Mammary epithelial cell (primary cell): ENCODE measurements at regions of chr14 and their contacts with region 1.

Region 1: GRCh38 chr14:54566410-54567223 is at the start of gene SAMD4A:
- DNase-seq: peak; percentile 83
- H3K4me3 ChIP-seq: peak within 1 kb of the TSS; percentile 82 to 90 (median 85)
- H3K27ac ChIP-seq: peak within 1 kb of the TSS; percentile 84
- H3K4me1 ChIP-seq: peaks cover 40% of the 10 kb centered on the region
- H3K27me3 ChIP-seq: no peaks in the 10 kb centered on the region
- CTCF ChIP-seq: peak; percentile 14 to 46
- total RNA-seq, gene SAMD4A: 42.0 to 48.8 TPM

Region 2: DNA sequence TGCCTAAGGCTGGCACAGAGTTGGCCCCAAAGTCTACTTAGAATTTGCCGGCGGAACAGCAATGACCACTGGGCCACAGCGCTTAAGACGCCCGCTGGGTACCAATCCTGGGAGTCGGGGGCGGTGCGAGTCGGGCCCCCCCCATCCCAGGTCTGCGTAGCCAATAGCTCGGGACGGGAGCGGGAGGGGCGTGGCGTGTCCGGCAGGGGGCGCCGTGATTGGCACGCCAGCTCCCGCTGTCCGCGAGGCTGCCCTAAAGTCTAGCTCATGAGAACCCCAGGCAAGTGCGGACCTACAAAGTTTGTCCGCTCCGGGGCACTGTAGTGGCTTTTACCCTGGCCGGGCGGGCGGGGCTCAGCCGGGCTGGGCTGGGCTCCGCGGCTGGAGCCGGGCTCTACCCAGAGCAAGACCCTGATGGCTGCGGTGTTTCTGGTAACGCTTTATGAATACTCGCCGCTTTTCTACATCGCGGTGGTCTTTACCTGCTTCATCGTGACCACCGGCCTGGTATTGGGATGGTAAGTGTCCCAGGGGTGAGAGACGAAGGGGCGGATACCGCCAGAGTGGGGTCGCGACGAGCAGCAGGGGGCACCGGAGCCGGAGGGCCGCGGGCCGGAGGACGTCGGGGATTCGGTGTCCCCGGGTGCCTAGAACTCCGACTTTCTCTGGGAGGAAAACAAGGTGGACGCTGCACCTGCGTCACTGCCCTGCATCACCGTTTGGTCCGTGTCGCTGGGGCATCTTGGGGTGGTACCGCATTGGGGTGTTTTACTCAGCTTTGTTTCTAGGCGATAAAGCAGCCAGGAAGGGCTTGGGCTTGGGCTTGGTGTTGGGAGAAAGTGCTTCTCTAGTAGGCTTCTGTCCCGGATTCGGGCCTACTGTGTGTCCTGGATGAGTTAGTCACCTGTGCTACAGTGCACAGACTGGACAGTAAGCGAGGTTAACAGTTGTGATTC is 56.8 kb before region 1 on chr14 and contains the start of gene CGRRF1:
- CTCF ChIA-PET with region 1: no interaction called
- dilution Hi-C with region 1: no loop called
- in situ Hi-C with region 1: no loop called
- intact Hi-C with region 1: loop called (anchors 2 kb)
- DNase-seq: peak; percentile 98
- H3K4me3 ChIP-seq: peak within 1 kb of the TSS; percentile 90 to 97 (median 96)
- H3K27ac ChIP-seq: peak within 1 kb of the TSS; percentile 63
- H3K4me1 ChIP-seq: peaks cover 8% of the 10 kb centered on the region
- H3K27me3 ChIP-seq: no peaks in the 10 kb centered on the region
- CTCF ChIP-seq: peak in 1 of 2 donors; percentile 49
- total RNA-seq, gene CGRRF1: 14.3 to 16.4 TPM

Region 3: DNA sequence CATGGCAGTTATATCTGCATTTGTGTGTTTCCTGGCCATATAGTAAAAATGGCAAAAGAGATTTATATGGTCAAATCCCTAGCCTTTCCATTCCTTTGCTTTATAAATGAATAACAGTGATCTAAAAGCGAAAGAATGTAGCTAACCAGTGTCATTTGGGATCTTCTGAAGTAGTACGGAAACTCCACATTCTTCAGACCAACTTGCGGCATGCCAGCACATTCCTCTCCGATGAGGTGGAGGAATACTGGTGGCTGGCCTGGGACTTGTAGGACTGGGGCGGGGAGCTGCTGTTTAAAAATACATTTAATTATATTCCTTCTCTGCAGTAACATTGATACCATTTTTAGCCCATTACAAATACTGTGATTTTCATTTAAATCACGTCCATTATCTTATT is 85.6 kb after region 1 on chr14:
- CTCF ChIA-PET with region 1: interaction called, 9 read pairs
- dilution Hi-C with region 1: no loop called
- in situ Hi-C with region 1: no loop called
- intact Hi-C with region 1: loop called (anchors 2 kb)
- DNase-seq: peak; percentile 98
- H3K4me3 ChIP-seq: peak overlapping the region in 2 of 3 experiments; percentile 37 to 40
- H3K27ac ChIP-seq: peak overlapping the region; percentile 94
- H3K4me1 ChIP-seq: peaks cover 45% of the 10 kb centered on the region
- H3K27me3 ChIP-seq: no peaks in the 10 kb centered on the region
- CTCF ChIP-seq: no peak

Region 4: GRCh38 chr14:54691525-54692283 is 125.1 kb after region 1 on chr14:
- CTCF ChIA-PET with region 1: interaction called, 24 read pairs
- dilution Hi-C with region 1: loop called (anchors 5 kb)
- in situ Hi-C with region 1: loop called (anchors 5 to 10 kb)
- intact Hi-C with region 1: loop called (anchors 1 kb)
- DNase-seq: peak; percentile 64
- H3K4me3 ChIP-seq: no peak overlapping the region
- H3K27ac ChIP-seq: no peak overlapping the region
- H3K4me1 ChIP-seq: peaks cover 8% of the 10 kb centered on the region
- H3K27me3 ChIP-seq: no peaks in the 10 kb centered on the region
- CTCF ChIP-seq: peak; percentile 93 to 97

Region 5: DNA sequence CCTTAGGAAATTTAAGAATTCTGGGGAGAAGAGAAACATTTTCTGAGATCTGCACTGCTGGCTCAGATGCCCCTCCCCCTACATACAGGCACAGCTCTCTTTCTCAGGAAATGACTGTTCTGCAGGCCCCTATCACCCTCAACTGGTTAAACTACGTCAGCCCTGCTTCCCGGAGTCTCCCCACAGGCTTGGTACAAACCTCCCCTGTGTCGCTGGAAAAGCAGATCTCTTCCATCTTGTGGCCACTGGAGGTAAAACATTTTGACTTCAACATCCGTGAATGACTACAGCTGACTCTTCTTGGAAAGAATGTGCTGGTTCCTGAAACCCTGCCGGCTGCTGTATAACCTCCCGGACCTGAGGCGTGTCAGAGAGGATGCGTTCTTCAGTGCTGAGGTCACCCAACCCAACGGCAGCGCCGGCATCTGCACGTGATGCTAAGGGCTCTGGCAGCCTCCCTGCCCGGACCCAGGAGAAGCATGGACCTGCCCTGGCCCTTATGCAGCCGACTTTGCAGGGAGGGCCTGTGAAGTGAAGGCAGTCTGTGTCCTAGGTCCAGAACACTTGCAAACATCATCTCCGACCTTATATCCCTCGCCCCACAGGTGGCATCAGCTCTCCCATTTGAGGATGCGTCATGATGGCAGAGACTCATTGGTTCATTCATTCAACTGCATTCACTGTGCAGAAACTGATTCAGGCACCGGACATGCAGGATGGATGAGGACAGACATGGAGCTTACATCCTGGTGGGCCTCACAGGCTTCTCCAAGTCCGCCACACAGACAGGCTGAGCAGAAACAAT is 206.8 kb after region 1 on chr14:
- CTCF ChIA-PET with region 1: interaction called, 22 read pairs
- dilution Hi-C with region 1: no loop called
- in situ Hi-C with region 1: no loop called
- intact Hi-C with region 1: loop called (anchors 1 kb)
- DNase-seq: peak; percentile 99
- H3K4me3 ChIP-seq: no peak overlapping the region
- H3K27ac ChIP-seq: peak overlapping the region; percentile 93
- H3K4me1 ChIP-seq: peaks cover 43% of the 10 kb centered on the region
- H3K27me3 ChIP-seq: no peaks in the 10 kb centered on the region
- CTCF ChIP-seq: peak; percentile 66 to 75

Region 6: GRCh38 chr14:54893151-54893760 is 326.6 kb after region 1 on chr14:
- CTCF ChIA-PET with region 1: no interaction called
- dilution Hi-C with region 1: no loop called
- in situ Hi-C with region 1: no loop called
- intact Hi-C with region 1: loop called (anchors 1 kb)
- DNase-seq: peak; percentile 86
- H3K4me3 ChIP-seq: no peak overlapping the region
- H3K27ac ChIP-seq: peak overlapping the region; percentile 18
- H3K4me1 ChIP-seq: peaks cover 7% of the 10 kb centered on the region
- H3K27me3 ChIP-seq: no peaks in the 10 kb centered on the region
- CTCF ChIP-seq: peak; percentile 77 to 89

Region 7: DNA sequence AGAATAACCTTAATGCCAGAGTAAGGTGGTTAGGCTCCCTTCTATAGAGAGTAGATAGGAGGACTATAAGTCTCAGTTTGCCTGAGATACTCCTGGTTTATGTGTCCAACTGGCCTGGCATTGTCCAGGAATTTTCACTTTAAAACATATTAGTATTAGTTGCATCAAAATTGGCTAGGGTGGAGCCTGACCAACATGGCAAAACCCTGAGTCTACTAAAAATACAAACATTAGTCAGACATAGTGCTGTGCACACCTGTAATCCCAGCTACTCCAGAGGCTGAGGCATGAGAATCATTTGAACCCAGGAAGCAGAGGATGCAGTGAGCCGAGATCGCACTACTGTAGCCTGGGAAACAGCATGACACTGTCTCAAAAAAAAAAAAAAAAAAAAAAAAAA is 448.4 kb after region 1 on chr14:
- CTCF ChIA-PET with region 1: interaction called, 15 read pairs
- dilution Hi-C with region 1: no loop called
- in situ Hi-C with region 1: no loop called
- intact Hi-C with region 1: no loop called
- DNase-seq: peak; percentile 29
- H3K4me3 ChIP-seq: no peak overlapping the region
- H3K27ac ChIP-seq: no peak overlapping the region
- H3K4me1 ChIP-seq: no peaks in the 10 kb centered on the region
- H3K27me3 ChIP-seq: no peaks in the 10 kb centered on the region
- CTCF ChIP-seq: no peak